ENCODE measurements at regions of chr2 and their contacts with region 1.

Region 1: GRCh38 chr2:73985308-73986084 is 786 bp downstream of the TET3 start:
- DNase-seq: peak in 8 of 9 donors; percentile 43 to 78 (median 52)
- ATAC-seq: peak; percentile 63
- H3K4me3 ChIP-seq: peak overlapping the region; percentile 62
- H3K4me3 Mint-ChIP-seq: peak overlapping the region; percentile 83 to 93 (median 88)
- H3K27ac ChIP-seq: peak overlapping the region; percentile 90
- H3K27ac Mint-ChIP-seq: peak overlapping the region; percentile 66 to 94 (median 87)
- H3K4me1 ChIP-seq: peaks cover 40 to 63% of the 10 kb centered on the region in 2 donors
- H3K4me1 Mint-ChIP-seq: peaks cover 64 to 85% (median 81%) of the 10 kb centered on the region in 7 donors
- H3K27me3 ChIP-seq: no peaks in the 10 kb centered on the region
- H3K27me3 Mint-ChIP-seq: peaks cover 0 to 28% (median 0%) of the 10 kb centered on the region in 5 donors

Region 2: DNA sequence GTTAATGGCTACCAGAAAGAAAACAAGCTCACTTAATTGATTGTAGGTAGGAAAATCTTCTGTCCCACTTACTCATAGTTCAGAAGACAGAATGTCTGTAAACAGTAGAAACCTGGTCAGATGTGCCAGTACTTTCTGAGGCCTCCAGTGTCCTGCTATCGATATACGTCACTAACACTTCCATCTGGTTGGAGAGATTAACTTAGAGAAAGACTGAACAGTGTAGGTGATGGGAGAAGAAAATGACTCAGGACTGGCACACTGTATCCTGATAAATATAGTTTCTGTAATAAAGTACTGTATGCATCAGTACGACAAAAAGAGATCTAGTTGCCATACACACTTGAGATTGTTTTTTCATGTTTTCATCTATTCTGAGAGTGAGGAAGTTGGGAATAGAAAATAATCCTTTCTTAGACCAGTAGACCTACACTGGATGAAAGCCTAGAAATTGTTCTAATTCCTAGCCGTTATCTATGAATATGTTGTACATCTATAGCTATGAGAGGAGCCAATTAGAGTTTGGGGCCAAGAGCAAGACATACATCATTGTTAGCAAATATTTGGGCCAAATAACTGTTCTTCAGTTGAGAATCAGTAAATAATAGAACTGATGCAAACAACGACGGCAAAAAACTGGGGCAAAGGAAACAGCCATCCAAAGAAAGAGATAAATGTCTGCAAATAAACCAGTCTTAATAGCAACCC is 449.2 kb before region 1 on chr2:
- CTCF ChIA-PET with region 1: no interaction called
- POLR2A ChIA-PET with region 1: no interaction called
- intact Hi-C with region 1: no loop called
- DNase-seq: no peak
- ATAC-seq: no peak
- H3K4me3 ChIP-seq: no peak overlapping the region
- H3K4me3 Mint-ChIP-seq: no peak overlapping the region
- H3K27ac ChIP-seq: no peak overlapping the region
- H3K27ac Mint-ChIP-seq: no peak overlapping the region
- H3K4me1 ChIP-seq: no peaks in the 10 kb centered on the region
- H3K4me1 Mint-ChIP-seq: no peaks in the 10 kb centered on the region
- H3K27me3 ChIP-seq: no peaks in the 10 kb centered on the region
- H3K27me3 Mint-ChIP-seq: no peaks in the 10 kb centered on the region

Region 3: GRCh38 chr2:73907840-73908452 is 77.5 kb before region 1 on chr2:
- CTCF ChIA-PET with region 1: interaction called, 37 read pairs
- POLR2A ChIA-PET with region 1: interaction called, 3 read pairs
- intact Hi-C with region 1: loop called in 1 of 2 experiments (anchors 1 kb)
- DNase-seq: peak in 8 of 9 donors; percentile 37 to 64 (median 48)
- ATAC-seq: peak; percentile 92
- H3K4me3 ChIP-seq: no peak overlapping the region
- H3K4me3 Mint-ChIP-seq: no peak overlapping the region
- H3K27ac ChIP-seq: no peak overlapping the region
- H3K27ac Mint-ChIP-seq: peak overlapping the region in 4 of 9 donors; percentile 19 to 61 (median 40)
- H3K4me1 ChIP-seq: no peaks in the 10 kb centered on the region
- H3K4me1 Mint-ChIP-seq: peaks cover 0 to 3% (median 0%) of the 10 kb centered on the region in 7 donors
- H3K27me3 ChIP-seq: no peaks in the 10 kb centered on the region
- H3K27me3 Mint-ChIP-seq: no peaks in the 10 kb centered on the region

Region 4: GRCh38 chr2:73944714-73945113 is 40.8 kb before region 1 on chr2:
- CTCF ChIA-PET with region 1: interaction called, 3 read pairs
- POLR2A ChIA-PET with region 1: interaction called, 8 read pairs
- intact Hi-C with region 1: loop called in 1 of 2 experiments (anchors 1 kb)
- DNase-seq: no peak
- ATAC-seq: no peak
- H3K4me3 ChIP-seq: no peak overlapping the region
- H3K4me3 Mint-ChIP-seq: peak overlapping the region in 2 of 10 donors; percentile 4 to 46
- H3K27ac ChIP-seq: peak overlapping the region; percentile 34
- H3K27ac Mint-ChIP-seq: peak overlapping the region in 8 of 9 donors; percentile 20 to 96 (median 62)
- H3K4me1 ChIP-seq: peaks cover 0 to 59% of the 10 kb centered on the region in 2 donors
- H3K4me1 Mint-ChIP-seq: peaks cover 47 to 97% (median 84%) of the 10 kb centered on the region in 7 donors
- H3K27me3 ChIP-seq: no peaks in the 10 kb centered on the region
- H3K27me3 Mint-ChIP-seq: no peaks in the 10 kb centered on the region

Region 5: GRCh38 chr2:74002487-74003391 is 17.2 kb after region 1 on chr2:
- CTCF ChIA-PET with region 1: interaction called, 5 read pairs
- POLR2A ChIA-PET with region 1: interaction called, 19 read pairs
- intact Hi-C with region 1: loop called (anchors 1 kb)
- DNase-seq: peak; percentile 71 to 89 (median 79)
- ATAC-seq: peak; percentile 95
- H3K4me3 ChIP-seq: peak overlapping the region; percentile 49
- H3K4me3 Mint-ChIP-seq: peak overlapping the region; percentile 82 to 95 (median 86)
- H3K27ac ChIP-seq: peak overlapping the region; percentile 67
- H3K27ac Mint-ChIP-seq: peak overlapping the region in 8 of 9 donors; percentile 59 to 92 (median 78)
- H3K4me1 ChIP-seq: peaks cover 9 to 35% of the 10 kb centered on the region in 2 donors
- H3K4me1 Mint-ChIP-seq: peaks cover 56 to 89% (median 75%) of the 10 kb centered on the region in 7 donors
- H3K27me3 ChIP-seq: no peaks in the 10 kb centered on the region
- H3K27me3 Mint-ChIP-seq: no peaks in the 10 kb centered on the region

Region 6: DNA sequence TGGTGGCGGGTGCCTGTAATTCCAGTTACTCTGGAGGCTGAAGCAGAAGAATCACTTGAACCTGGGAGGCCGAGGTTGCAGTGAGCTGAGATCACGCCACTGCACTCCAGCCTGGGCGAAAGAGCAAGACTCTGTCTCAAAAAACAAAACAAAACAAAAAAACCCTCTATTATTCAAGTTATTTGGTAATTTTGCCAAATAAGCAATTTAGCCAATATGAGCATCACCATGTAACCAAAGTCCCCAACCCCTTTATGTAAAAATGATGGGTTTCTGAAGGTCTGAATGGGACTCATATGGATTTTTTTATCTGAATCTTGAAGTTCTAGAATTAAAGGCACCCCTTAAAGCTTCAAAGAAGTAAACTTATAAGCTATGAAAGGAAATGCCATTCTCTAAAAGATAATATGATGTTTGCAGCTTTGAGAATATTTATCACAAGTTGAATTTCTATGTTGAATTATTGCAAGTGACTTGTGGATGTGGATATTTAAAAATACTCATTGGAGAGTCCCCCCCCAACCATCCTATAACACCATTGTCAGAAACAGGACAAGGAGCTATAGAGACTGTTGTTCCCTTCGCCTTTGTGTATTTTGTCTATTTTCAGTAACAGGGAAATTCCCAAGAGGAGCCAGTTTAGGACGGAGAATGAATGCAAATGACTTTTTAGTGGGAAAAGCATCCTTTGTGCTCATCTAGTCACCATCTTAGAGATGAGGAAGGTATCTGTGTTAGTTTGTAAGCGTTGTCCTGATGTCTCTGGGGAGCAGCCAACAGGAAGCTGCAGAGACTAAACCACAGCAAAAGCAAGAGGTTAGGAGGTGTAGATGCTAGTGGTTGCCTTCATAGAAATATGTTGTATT is 67.5 kb after region 1 on chr2:
- CTCF ChIA-PET with region 1: no interaction called
- POLR2A ChIA-PET with region 1: interaction called, 3 read pairs
- intact Hi-C with region 1: loop called in 1 of 2 experiments (anchors 2 kb)
- DNase-seq: peak in 7 of 9 donors; percentile 42 to 72 (median 60)
- ATAC-seq: peak; percentile 90
- H3K4me3 ChIP-seq: peak overlapping the region; percentile 31
- H3K4me3 Mint-ChIP-seq: peak overlapping the region; percentile 53 to 76 (median 68)
- H3K27ac ChIP-seq: peak overlapping the region; percentile 17
- H3K27ac Mint-ChIP-seq: peak overlapping the region; percentile 47 to 93 (median 87)
- H3K4me1 ChIP-seq: peaks cover 17 to 20% of the 10 kb centered on the region in 2 donors
- H3K4me1 Mint-ChIP-seq: peaks cover 33 to 85% (median 57%) of the 10 kb centered on the region in 7 donors
- H3K27me3 ChIP-seq: no peaks in the 10 kb centered on the region
- H3K27me3 Mint-ChIP-seq: no peaks in the 10 kb centered on the region

Region 7: GRCh38 chr2:74063486-74063885 is 78.0 kb after region 1 on chr2:
- CTCF ChIA-PET with region 1: no interaction called
- POLR2A ChIA-PET with region 1: no interaction called
- intact Hi-C with region 1: no loop called
- DNase-seq: no peak
- ATAC-seq: no peak
- H3K4me3 ChIP-seq: no peak overlapping the region
- H3K4me3 Mint-ChIP-seq: no peak overlapping the region
- H3K27ac ChIP-seq: no peak overlapping the region
- H3K27ac Mint-ChIP-seq: peak overlapping the region in 2 of 9 donors; percentile 4 to 41
- H3K4me1 ChIP-seq: no peaks in the 10 kb centered on the region
- H3K4me1 Mint-ChIP-seq: peaks cover 2 to 54% (median 36%) of the 10 kb centered on the region in 7 donors
- H3K27me3 ChIP-seq: no peaks in the 10 kb centered on the region
- H3K27me3 Mint-ChIP-seq: no peaks in the 10 kb centered on the region

Region 8: GRCh38 chr2:74147727-74148456 is 162.4 kb after region 1 on chr2 and contains the start of gene BOLA3:
- CTCF ChIA-PET with region 1: no interaction called
- POLR2A ChIA-PET with region 1: no interaction called
- intact Hi-C with region 1: loop called (anchors 2 to 5 kb)
- DNase-seq: peak; percentile 55 to 93 (median 70)
- ATAC-seq: peak; percentile 95
- H3K4me3 ChIP-seq: peak within 1 kb of the TSS; percentile 72
- H3K4me3 Mint-ChIP-seq: no peak within 1 kb of the TSS
- H3K27ac ChIP-seq: peak within 1 kb of the TSS; percentile 72
- H3K27ac Mint-ChIP-seq: no peak within 1 kb of the TSS
- H3K4me1 ChIP-seq: peaks cover 14 to 15% of the 10 kb centered on the region in 2 donors
- H3K4me1 Mint-ChIP-seq: peaks cover 0 to 15% (median 0%) of the 10 kb centered on the region in 7 donors
- H3K27me3 ChIP-seq: no peaks in the 10 kb centered on the region
- H3K27me3 Mint-ChIP-seq: no peaks in the 10 kb centered on the region
- total RNA-seq, gene BOLA3: 6.9 to 54.8 (median 13.7) TPM

Region 9: GRCh38 chr2:74198461-74199274 is 213.2 kb after region 1 on chr2 and contains the start of gene MTHFD2:
- CTCF ChIA-PET with region 1: no interaction called
- POLR2A ChIA-PET with region 1: no interaction called
- intact Hi-C with region 1: loop called (anchors 2 to 5 kb)
- DNase-seq: peak; percentile 76 to 93 (median 82)
- ATAC-seq: peak; percentile 94
- H3K4me3 ChIP-seq: peak within 1 kb of the TSS; percentile 65
- H3K4me3 Mint-ChIP-seq: peak within 1 kb of the TSS; percentile 90 to 100 (median 96)
- H3K27ac ChIP-seq: peak within 1 kb of the TSS; percentile 88
- H3K27ac Mint-ChIP-seq: peak within 1 kb of the TSS; percentile 94 to 100 (median 97)
- H3K4me1 ChIP-seq: peaks cover 13 to 16% of the 10 kb centered on the region in 2 donors
- H3K4me1 Mint-ChIP-seq: peaks cover 29 to 50% (median 35%) of the 10 kb centered on the region in 7 donors
- H3K27me3 ChIP-seq: no peaks in the 10 kb centered on the region
- H3K27me3 Mint-ChIP-seq: no peaks in the 10 kb centered on the region
- total RNA-seq, gene MTHFD2: 14.5 to 186 (median 25.1) TPM

Region 10: GRCh38 chr2:75079575-75079974 is 1094.1 kb after region 1 on chr2:
- CTCF ChIA-PET with region 1: no interaction called
- POLR2A ChIA-PET with region 1: no interaction called
- intact Hi-C with region 1: no loop called
- DNase-seq: no peak
- ATAC-seq: no peak
- H3K4me3 ChIP-seq: no peak overlapping the region
- H3K4me3 Mint-ChIP-seq: no peak overlapping the region
- H3K27ac ChIP-seq: no peak overlapping the region
- H3K27ac Mint-ChIP-seq: no peak overlapping the region
- H3K4me1 ChIP-seq: no peaks in the 10 kb centered on the region
- H3K4me1 Mint-ChIP-seq: no peaks in the 10 kb centered on the region
- H3K27me3 ChIP-seq: no peaks in the 10 kb centered on the region
- H3K27me3 Mint-ChIP-seq: peaks cover 0 to under 1% (median 0%) of the 10 kb centered on the region in 5 donors

Measured in naive thymus-derived CD4-positive, alpha-beta T cell (primary cell).